ENCODE measurements at regions of chr5 and their contacts with region 1.

Region 1: DNA sequence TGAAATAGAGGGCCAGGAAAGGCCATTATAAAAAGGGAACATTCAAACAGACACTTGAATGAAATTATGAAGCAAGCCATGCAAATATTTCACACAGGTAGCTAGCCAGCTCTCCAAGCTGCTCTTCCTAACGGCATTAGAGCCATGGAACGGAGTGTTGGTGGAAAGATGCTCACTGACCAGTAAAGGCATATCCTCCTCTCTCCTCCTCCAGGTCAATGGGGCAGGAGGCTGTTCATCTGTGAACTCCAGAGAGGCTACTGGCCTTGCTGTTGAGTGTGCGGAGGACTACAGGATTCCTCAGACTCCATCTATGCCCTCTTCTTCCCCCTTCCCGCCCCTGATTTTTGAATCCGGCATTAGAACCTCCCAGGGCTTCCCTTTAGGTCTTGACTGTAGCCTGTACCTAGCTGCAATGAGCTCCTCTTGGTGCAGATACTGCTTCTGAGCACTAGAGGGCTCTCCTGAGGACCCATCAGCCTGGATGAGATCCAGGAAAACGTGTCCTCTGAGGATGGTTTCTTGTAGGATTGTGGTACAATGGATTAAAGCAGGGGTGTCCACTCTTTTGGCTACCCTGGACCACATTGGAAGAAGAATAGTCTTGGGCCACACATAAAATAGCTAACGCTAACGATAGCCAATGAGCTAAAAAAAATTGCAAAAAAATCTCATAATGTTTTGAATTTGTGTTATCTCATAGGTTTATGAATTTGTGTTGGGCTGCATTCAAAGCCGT is 162.2 kb downstream of the SREK1 start:
- DNase-seq: peak; percentile 78
- H3K4me3 ChIP-seq: peak overlapping the region in 1 of 2 experiments; percentile 44; a peak in 1 of 4 replicates
- H3K27ac ChIP-seq: no peak overlapping the region
- H3K4me1 ChIP-seq: no peaks in the 10 kb centered on the region
- H3K27me3 ChIP-seq: no peaks in the 10 kb centered on the region
- CTCF ChIP-seq: peak; percentile 84
- EP300 ChIP-seq: no peak
- RAD21 ChIP-seq: peak; percentile 69

Region 2: GRCh38 chr5:66324357-66324756 is 18.1 kb after region 1 on chr5:
- CTCF ChIA-PET with region 1: interaction called, 46 read pairs
- POLR2A ChIA-PET with region 1: interaction called, 3 read pairs
- DNase-seq: no peak
- H3K4me3 ChIP-seq: no peak overlapping the region
- H3K27ac ChIP-seq: no peak overlapping the region
- H3K4me1 ChIP-seq: peaks cover 0 to 15% of the 10 kb centered on the region in 2 experiments; a peak in 2 of 4 replicates
- H3K27me3 ChIP-seq: no peaks in the 10 kb centered on the region; the same call in 1 of the 2 replicates
- CTCF ChIP-seq: no peak
- EP300 ChIP-seq: no peak
- RAD21 ChIP-seq: no peak

Region 3: DNA sequence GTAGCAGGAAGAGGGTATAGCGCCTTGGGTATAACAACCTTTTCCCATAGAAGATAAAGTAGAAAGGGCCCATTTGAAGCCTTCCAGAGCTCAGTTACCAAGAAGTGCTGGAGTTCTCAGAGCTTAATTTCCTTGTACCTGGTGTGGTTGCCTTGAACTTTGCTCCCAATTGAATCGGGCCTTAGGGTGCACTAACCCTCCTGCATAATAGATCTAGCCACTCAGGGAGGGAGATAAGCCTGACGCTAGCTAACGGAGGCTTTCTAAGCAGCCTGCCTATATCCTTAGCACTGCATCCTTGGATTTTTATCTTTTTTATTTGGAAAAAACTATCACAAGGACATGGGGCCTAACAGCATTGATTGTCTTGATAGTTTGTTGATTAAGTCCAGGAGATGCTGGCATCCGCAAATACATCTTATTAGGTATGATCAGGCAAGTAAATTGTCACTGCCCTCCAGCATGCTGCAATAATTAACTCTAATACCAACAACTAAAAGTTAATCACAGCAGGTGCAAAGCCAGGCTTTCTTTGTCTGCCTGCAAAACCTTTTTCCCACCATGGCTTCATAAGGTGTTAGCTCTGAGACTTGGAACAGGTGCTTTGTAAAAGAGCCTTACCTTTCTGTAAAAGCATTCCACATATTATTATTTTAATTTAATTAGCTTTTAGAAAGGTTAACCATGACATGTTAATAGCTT is 37.2 kb after region 1 on chr5:
- CTCF ChIA-PET with region 1: interaction called, 12 read pairs
- POLR2A ChIA-PET with region 1: no interaction called
- DNase-seq: no peak
- H3K4me3 ChIP-seq: no peak overlapping the region
- H3K27ac ChIP-seq: no peak overlapping the region
- H3K4me1 ChIP-seq: peaks cover 0 to 23% of the 10 kb centered on the region in 2 experiments; a peak in 2 of 4 replicates
- H3K27me3 ChIP-seq: peaks cover 4% of the 10 kb centered on the region; the same call in 1 of the 2 replicates
- CTCF ChIP-seq: no peak
- EP300 ChIP-seq: no peak
- RAD21 ChIP-seq: no peak

Region 4: GRCh38 chr5:66595756-66596635 is 289.7 kb after region 1 on chr5 and contains the start of gene MAST4:
- CTCF ChIA-PET with region 1: interaction called, 26 read pairs
- POLR2A ChIA-PET with region 1: no interaction called
- DNase-seq: peak; percentile 92
- H3K4me3 ChIP-seq: peak within 1 kb of the TSS; percentile 63 to 81
- H3K27ac ChIP-seq: no peak within 1 kb of the TSS
- H3K4me1 ChIP-seq: peaks cover 0 to 12% of the 10 kb centered on the region in 2 experiments; a peak in 1 of 4 replicates
- H3K27me3 ChIP-seq: peaks cover 34% of the 10 kb centered on the region
- CTCF ChIP-seq: no peak
- EP300 ChIP-seq: no peak
- RAD21 ChIP-seq: no peak
- polyA plus RNA-seq, gene MAST4: 1.3 and 2.2 TPM in 2 replicates

Region 5: GRCh38 chr5:66742083-66742895 is 436.0 kb after region 1 on chr5:
- CTCF ChIA-PET with region 1: interaction called, 26 read pairs
- POLR2A ChIA-PET with region 1: no interaction called
- DNase-seq: peak; percentile 39
- H3K4me3 ChIP-seq: no peak overlapping the region
- H3K27ac ChIP-seq: no peak overlapping the region
- H3K4me1 ChIP-seq: no peaks in the 10 kb centered on the region
- H3K27me3 ChIP-seq: no peaks in the 10 kb centered on the region
- CTCF ChIP-seq: peak; percentile 21; the same call in 1 of the 2 replicates
- EP300 ChIP-seq: no peak
- RAD21 ChIP-seq: peak; percentile 40

Measured in SK-N-SH (cell line).